ENCODE measurements at regions of chr11 and their contacts with region 1.

Region 1: DNA sequence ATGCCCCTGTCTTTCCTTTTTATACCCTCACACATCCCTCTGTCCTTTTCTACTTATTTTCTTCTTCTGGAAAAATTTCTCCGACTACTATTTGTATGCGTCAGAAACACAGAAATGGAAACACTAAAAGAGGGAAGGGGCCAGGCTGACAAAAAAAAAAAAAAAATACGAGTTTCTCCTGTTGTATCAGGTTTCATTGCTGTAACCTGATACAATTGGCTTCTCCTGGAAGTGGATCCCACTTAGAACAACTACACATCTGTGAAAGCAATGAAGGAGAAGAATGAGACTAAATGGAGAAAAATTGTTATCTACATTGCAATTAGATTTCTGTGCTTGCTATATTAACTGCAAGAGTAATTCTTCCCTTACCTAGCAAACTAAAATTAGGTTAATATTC is 393.9 kb downstream of the GUCY1A2 start:
- DNase-seq: no peak
- ATAC-seq: no peak
- H3K4me3 ChIP-seq: no peak overlapping the region
- H3K4me3 Mint-ChIP-seq: no peak overlapping the region
- H3K27ac ChIP-seq: no peak overlapping the region
- H3K27ac Mint-ChIP-seq: no peak overlapping the region
- H3K4me1 ChIP-seq: no peaks in the 10 kb centered on the region
- H3K4me1 Mint-ChIP-seq: no peaks in the 10 kb centered on the region
- H3K27me3 ChIP-seq: no peaks in the 10 kb centered on the region
- H3K27me3 Mint-ChIP-seq: no peaks in the 10 kb centered on the region
- CTCF ChIP-seq: no peak

Region 2: GRCh38 chr11:106644824-106645223 is 20.4 kb after region 1 on chr11:
- CTCF ChIA-PET with region 1: interaction called, 3 read pairs
- POLR2A ChIA-PET with region 1: no interaction called
- intact Hi-C with region 1: loop called in 1 of 2 experiments (anchors 2 kb)
- DNase-seq: no peak
- ATAC-seq: no peak
- H3K4me3 ChIP-seq: no peak overlapping the region
- H3K4me3 Mint-ChIP-seq: no peak overlapping the region
- H3K27ac ChIP-seq: no peak overlapping the region
- H3K27ac Mint-ChIP-seq: no peak overlapping the region
- H3K4me1 ChIP-seq: no peaks in the 10 kb centered on the region
- H3K4me1 Mint-ChIP-seq: no peaks in the 10 kb centered on the region
- H3K27me3 ChIP-seq: no peaks in the 10 kb centered on the region
- H3K27me3 Mint-ChIP-seq: no peaks in the 10 kb centered on the region
- CTCF ChIP-seq: no peak